AG04450 (cell line): ENCODE measurements at regions of chr3 and their contacts with region 1.

Region 1: GRCh38 chr3:196518966-196519717 is 4.0 kb upstream of the SMCO1 start:
- DNase-seq: no peak
- H3K4me3 ChIP-seq: no peak overlapping the region
- H3K27ac ChIP-seq: no peak overlapping the region
- H3K27me3 ChIP-seq: no peaks in the 10 kb centered on the region
- CTCF ChIP-seq: peak; percentile 51

Region 2: GRCh38 chr3:196080982-196081790 is 438.0 kb before region 1 on chr3:
- CTCF ChIA-PET with region 1: interaction called, 10 read pairs
- POLR2A ChIA-PET with region 1: no interaction called
- DNase-seq: no peak
- H3K4me3 ChIP-seq: peak overlapping the region; percentile 94
- H3K27ac ChIP-seq: peak overlapping the region; percentile 75
- H3K27me3 ChIP-seq: peaks cover 2% of the 10 kb centered on the region
- CTCF ChIP-seq: no peak

Region 3: GRCh38 chr3:196432137-196432879 is 86.8 kb before region 1 on chr3 and contains the start of gene UBXN7:
- CTCF ChIA-PET with region 1: interaction called, 3 read pairs
- POLR2A ChIA-PET with region 1: interaction called, 12 read pairs
- DNase-seq: peak; percentile 85
- H3K4me3 ChIP-seq: peak within 1 kb of the TSS; percentile 94
- H3K27ac ChIP-seq: peak within 1 kb of the TSS; percentile 73
- H3K27me3 ChIP-seq: no peaks in the 10 kb centered on the region
- CTCF ChIP-seq: no peak
- polyA plus RNA-seq, gene UBXN7: 20.6 and 28.6 TPM in 2 replicates

Region 4: DNA sequence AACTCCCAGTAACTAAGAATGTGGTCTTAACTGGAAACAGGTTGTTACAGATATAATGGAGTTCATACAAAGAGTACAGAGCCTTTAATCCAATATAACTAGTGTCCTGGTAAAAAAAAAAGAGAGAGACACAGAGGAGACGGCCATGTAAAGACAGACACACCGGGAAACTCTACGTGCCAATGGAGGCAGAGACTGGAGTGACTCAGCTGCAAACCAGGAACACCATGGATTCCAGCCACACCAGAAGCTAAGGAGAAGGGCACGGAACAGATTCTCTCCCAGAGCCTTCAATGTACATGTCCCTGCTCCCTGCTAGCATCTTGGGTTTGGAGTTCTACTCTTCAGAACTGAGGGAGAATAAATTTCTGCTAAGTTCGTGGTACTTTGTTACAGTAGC is 20.1 kb before region 1 on chr3:
- CTCF ChIA-PET with region 1: no interaction called
- POLR2A ChIA-PET with region 1: no interaction called
- DNase-seq: no peak
- H3K4me3 ChIP-seq: no peak overlapping the region
- H3K27ac ChIP-seq: no peak overlapping the region
- H3K27me3 ChIP-seq: no peaks in the 10 kb centered on the region
- CTCF ChIP-seq: no peak

Region 5: DNA sequence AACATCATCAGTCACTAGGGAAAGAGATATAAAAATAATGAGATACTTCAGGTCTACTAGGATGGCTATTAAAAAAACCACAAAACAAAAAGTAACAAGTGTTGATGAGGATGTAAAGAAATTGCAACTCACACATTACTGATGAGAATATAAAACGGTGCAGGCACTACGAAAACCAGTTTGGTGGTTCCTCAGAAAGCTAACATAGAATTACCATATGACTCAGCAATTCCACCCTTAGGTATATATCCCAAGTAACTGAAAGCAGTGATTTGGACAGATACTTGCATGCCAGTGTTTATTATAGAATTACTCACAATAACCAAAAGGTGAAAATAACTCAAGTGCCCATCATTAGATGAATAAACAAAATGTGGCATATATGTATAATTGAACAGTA is 598.0 kb after region 1 on chr3:
- CTCF ChIA-PET with region 1: no interaction called
- POLR2A ChIA-PET with region 1: no interaction called
- DNase-seq: no peak
- H3K4me3 ChIP-seq: no peak overlapping the region
- H3K27ac ChIP-seq: no peak overlapping the region
- H3K27me3 ChIP-seq: no peaks in the 10 kb centered on the region
- CTCF ChIP-seq: no peak